Activated B cell treated with CpG ODN at 0.5 μM for 24 hours (primary cell): ENCODE measurements at regions of chr7 and their contacts with region 1.

Region 1: GRCh38 chr7:17844514-17845196 is 95.6 kb downstream of the SNX13 start:
- DNase-seq: no peak
- ATAC-seq: no peak
- H3K4me3 Mint-ChIP-seq: no peak overlapping the region
- H3K27ac Mint-ChIP-seq: no peak overlapping the region
- H3K4me1 Mint-ChIP-seq: peaks cover 20% of the 10 kb centered on the region
- H3K27me3 Mint-ChIP-seq: no peaks in the 10 kb centered on the region
- CTCF ChIP-seq: no peak

Region 2: GRCh38 chr7:17829034-17829433 is 15.6 kb before region 1 on chr7:
- CTCF ChIA-PET with region 1: no interaction called
- POLR2A ChIA-PET with region 1: no interaction called
- intact Hi-C with region 1: loop called (anchors 1 kb)
- DNase-seq: no peak
- ATAC-seq: no peak
- H3K4me3 Mint-ChIP-seq: no peak overlapping the region
- H3K27ac Mint-ChIP-seq: no peak overlapping the region
- H3K4me1 Mint-ChIP-seq: no peaks in the 10 kb centered on the region
- H3K27me3 Mint-ChIP-seq: no peaks in the 10 kb centered on the region
- CTCF ChIP-seq: no peak

Region 3: GRCh38 chr7:17863095-17863808 is 18.6 kb after region 1 on chr7:
- CTCF ChIA-PET with region 1: no interaction called
- POLR2A ChIA-PET with region 1: no interaction called
- intact Hi-C with region 1: loop called (anchors 2 kb)
- DNase-seq: no peak
- ATAC-seq: no peak
- H3K4me3 Mint-ChIP-seq: no peak overlapping the region
- H3K27ac Mint-ChIP-seq: no peak overlapping the region
- H3K4me1 Mint-ChIP-seq: no peaks in the 10 kb centered on the region
- H3K27me3 Mint-ChIP-seq: no peaks in the 10 kb centered on the region
- CTCF ChIP-seq: no peak